Right ventricle myocardium superior (tissue), 1 donor: ENCODE measurements at regions of chr19 and their contacts with region 1.

Region 1: DNA sequence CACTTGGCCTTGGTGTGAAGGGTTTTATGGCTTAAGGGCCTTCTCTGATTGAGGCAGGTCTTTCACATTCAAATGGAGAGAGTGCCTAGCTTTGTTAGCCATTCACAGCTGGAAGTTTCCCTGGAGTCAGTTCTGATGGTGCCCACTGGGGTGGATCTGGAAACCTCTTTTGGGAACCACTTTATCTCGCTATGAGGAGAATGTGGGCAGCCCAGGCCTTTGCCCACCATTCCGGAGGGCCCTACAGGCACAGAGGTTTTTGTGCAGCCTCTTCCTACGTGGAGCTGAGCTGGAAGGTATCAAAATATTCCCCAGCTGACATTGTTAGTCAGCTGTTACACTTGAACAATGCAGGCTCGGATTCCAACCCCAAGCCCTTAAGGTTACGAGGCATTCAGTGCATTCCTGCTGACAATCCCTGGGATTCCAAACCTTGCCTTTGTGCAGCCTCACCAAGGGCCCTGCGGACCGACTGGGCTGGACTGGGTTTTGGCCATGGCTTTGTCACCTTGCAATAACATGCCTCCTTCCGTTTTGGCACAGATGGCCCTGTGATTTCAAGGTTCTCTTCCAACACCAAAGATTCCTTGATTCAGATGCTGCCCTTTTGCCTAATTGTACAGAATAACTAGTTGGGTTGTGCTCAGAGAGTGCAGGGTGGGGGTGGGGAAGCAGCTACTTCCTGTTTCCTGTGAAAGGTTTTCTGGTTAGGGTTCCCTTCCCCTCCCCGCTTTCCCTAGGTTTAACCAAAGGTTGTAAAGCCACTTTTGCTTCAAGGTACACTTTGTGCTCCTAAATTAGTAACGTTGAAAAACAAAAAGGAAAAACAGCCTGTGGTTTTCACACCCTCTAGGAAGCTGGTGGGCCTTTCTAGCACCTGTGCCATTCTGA is 27.0 kb downstream of the SAE1 start:
- DNase-seq: peak; percentile 57
- ATAC-seq: peak; percentile 63

Region 2: GRCh38 chr19:47190167-47190727 is 32.6 kb after region 1 on chr19:
- intact Hi-C with region 1: loop called (anchors 5 kb)
- DNase-seq: peak; percentile 55
- ATAC-seq: peak; percentile 54